BJ (cell line): ENCODE measurements at regions of chr9 and their contacts with region 1.

Region 1: GRCh38 chr9:33813712-33814641 is 3.0 kb upstream of the UBE2R2 start:
- DNase-seq: peak; percentile 70
- H3K4me3 ChIP-seq: no peak overlapping the region
- H3K27me3 ChIP-seq: no peaks in the 10 kb centered on the region
- CTCF ChIP-seq: peak; percentile 64

Region 2: GRCh38 chr9:33737811-33738606 is 76.0 kb before region 1 on chr9:
- CTCF ChIA-PET with region 1: interaction called, 17 read pairs
- POLR2A ChIA-PET with region 1: no interaction called
- DNase-seq: no peak
- H3K4me3 ChIP-seq: no peak overlapping the region
- H3K27me3 ChIP-seq: no peaks in the 10 kb centered on the region; the same call in 1 of the 2 replicates
- CTCF ChIP-seq: peak; percentile 89

Region 3: GRCh38 chr9:33791117-33791516 is 22.9 kb before region 1 on chr9:
- CTCF ChIA-PET with region 1: interaction called, 17 read pairs
- POLR2A ChIA-PET with region 1: no interaction called
- DNase-seq: no peak
- H3K4me3 ChIP-seq: no peak overlapping the region
- H3K27me3 ChIP-seq: no peaks in the 10 kb centered on the region
- CTCF ChIP-seq: no peak

Region 4: GRCh38 chr9:33852216-33852826 is 38.3 kb after region 1 on chr9:
- CTCF ChIA-PET with region 1: interaction called, 17 read pairs
- POLR2A ChIA-PET with region 1: no interaction called
- DNase-seq: no peak
- H3K4me3 ChIP-seq: no peak overlapping the region
- H3K27me3 ChIP-seq: no peaks in the 10 kb centered on the region
- CTCF ChIP-seq: peak; percentile 50

Region 5: GRCh38 chr9:33858346-33858885 is 44.4 kb after region 1 on chr9:
- CTCF ChIA-PET with region 1: interaction called, 16 read pairs
- POLR2A ChIA-PET with region 1: no interaction called
- DNase-seq: no peak
- H3K4me3 ChIP-seq: no peak overlapping the region
- H3K27me3 ChIP-seq: no peaks in the 10 kb centered on the region
- CTCF ChIP-seq: no peak